AG04450 (cell line): ENCODE measurements at regions of chr7 and their contacts with region 1.

Region 1: DNA sequence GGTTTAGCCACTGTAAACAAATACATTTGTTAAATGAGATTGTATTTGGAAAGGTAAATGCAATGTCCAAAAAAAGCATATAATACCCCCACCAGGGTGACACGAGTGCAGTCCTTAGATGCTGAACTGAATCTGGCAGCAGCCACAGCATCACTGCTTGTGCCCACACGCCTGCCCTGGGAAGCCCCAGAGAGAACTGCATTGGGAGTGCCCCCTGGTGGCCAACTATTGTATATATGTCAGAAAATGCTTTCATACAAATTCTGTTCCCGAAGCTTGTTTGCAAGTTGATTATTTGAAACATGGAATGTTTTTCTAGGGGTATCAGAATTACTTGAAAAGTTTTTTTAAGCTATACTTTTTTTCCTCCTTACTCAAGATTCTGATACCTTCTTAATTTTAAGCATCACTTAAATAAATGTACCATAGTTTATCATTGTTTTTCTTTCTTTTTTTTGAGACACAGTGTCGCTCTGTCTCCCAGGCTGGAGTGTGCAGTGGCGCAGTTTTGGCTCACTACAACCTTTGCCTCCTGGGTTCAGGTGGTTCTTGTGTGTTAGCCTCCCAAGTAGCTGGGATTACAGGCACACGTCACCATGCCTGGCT is 50.1 kb downstream of the LANCL2 start:
- DNase-seq: peak; percentile 48
- H3K4me3 ChIP-seq: no peak overlapping the region
- H3K27ac ChIP-seq: no peak overlapping the region
- H3K27me3 ChIP-seq: no peaks in the 10 kb centered on the region
- CTCF ChIP-seq: peak; percentile 84

Region 2: DNA sequence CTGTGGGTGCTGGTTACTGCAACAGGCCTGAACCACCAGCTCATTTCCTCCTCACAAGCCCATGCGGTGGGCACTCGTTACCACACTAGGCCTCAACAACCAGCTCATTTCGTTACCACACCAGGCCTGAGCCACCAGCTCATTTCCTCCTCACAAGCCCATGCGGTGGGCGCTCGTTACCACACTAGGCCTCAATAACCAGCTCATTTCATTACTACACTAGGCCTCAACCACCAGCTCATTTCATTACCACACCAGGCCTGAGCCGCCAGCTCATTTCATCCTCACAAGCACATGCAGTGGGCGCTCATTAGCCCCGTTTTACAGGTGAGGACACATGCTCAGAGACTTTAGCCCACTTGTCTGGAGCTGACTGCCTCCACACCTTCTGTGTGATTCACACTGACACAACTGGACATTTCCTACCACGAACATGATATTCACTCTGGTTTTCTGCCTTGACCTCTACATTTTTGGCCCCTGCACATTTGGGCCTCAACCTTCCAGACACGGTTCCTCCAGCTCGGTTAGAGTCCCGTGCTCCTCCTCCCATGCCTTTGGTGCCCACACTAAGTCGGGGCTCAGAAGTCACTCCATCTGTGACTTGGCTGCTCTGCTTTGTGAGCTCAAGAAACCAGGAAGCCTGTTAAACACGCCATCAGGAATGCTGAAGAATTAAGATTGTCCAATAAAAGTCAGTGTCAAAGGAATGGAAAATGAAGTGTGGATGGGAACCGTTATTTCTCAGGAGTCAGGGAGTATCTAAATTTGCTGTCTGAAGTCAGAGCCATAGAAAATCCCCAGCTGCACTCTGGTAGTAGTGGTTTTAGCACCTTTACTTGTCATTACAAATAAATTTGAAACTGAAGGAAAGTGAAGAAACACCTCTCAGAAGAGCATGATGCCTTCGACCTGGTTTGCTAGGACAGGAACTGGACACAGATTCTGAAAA is 106.0 kb before region 1 on chr7:
- CTCF ChIA-PET with region 1: interaction called, 18 read pairs
- POLR2A ChIA-PET with region 1: no interaction called
- DNase-seq: no peak
- H3K4me3 ChIP-seq: no peak overlapping the region
- H3K27ac ChIP-seq: no peak overlapping the region
- H3K27me3 ChIP-seq: peaks cover 4% of the 10 kb centered on the region
- CTCF ChIP-seq: no peak

Region 3: DNA sequence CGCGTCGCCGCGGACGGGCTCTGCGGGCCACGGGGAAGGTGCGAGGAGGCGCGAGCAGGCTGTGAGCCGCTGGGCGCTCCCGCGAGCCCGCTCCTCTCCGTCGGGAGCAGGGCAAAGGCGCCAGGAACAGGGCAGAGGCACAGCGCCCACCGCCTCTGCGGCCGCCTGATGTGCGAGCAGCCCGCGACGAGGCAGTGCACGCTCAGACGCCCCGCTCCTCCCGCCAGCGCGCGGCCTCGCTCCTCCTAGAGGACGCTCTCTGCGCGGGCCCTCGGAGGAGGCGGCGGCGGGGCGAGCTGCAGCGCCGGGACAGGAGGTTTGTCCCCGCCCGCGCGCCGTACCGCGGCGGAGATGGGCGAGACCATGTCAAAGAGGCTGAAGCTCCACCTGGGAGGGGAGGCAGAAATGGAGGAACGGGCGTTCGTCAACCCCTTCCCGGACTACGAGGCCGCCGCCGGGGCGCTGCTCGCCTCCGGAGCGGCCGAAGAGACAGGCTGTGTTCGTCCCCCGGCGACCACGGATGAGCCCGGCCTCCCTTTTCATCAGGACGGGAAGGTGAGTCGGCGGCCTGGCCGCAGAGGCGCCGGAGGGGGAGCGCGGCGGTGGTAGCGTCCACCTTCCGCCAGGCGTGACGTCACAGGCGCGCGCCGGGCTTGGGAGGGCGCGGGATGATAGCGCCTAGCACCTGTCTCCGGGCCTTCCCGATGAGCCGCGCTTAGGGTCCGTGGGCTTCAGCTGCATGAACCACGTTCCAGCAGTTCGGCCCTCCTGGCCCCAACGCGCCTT is 49.4 kb before region 1 on chr7:
- CTCF ChIA-PET with region 1: interaction called, 51 read pairs
- POLR2A ChIA-PET with region 1: interaction called, 14 read pairs
- DNase-seq: peak; percentile 92
- H3K4me3 ChIP-seq: peak overlapping the region; percentile 97
- H3K27ac ChIP-seq: peak overlapping the region; percentile 97
- H3K27me3 ChIP-seq: no peaks in the 10 kb centered on the region
- CTCF ChIP-seq: peak; percentile 28

Region 4: GRCh38 chr7:55400191-55400590 is 15.1 kb before region 1 on chr7:
- CTCF ChIA-PET with region 1: interaction called, 26 read pairs
- POLR2A ChIA-PET with region 1: no interaction called
- DNase-seq: no peak
- H3K4me3 ChIP-seq: no peak overlapping the region
- H3K27ac ChIP-seq: no peak overlapping the region
- H3K27me3 ChIP-seq: no peaks in the 10 kb centered on the region
- CTCF ChIP-seq: no peak